ENCODE measurements at regions of chr4 and their contacts with region 1.

Region 1: GRCh38 chr4:3531879-3532713 is at the start of gene LRPAP1:
- DNase-seq: peak; percentile 92
- ATAC-seq: peak; percentile 94
- H3K4me3 Mint-ChIP-seq: peak within 1 kb of the TSS; percentile 100
- H3K27ac Mint-ChIP-seq: peak within 1 kb of the TSS; percentile 97
- H3K4me1 Mint-ChIP-seq: peaks cover 20% of the 10 kb centered on the region
- H3K27me3 Mint-ChIP-seq: no peaks in the 10 kb centered on the region
- total RNA-seq, gene LRPAP1: 50.8 to 53.4 TPM

Region 2: DNA sequence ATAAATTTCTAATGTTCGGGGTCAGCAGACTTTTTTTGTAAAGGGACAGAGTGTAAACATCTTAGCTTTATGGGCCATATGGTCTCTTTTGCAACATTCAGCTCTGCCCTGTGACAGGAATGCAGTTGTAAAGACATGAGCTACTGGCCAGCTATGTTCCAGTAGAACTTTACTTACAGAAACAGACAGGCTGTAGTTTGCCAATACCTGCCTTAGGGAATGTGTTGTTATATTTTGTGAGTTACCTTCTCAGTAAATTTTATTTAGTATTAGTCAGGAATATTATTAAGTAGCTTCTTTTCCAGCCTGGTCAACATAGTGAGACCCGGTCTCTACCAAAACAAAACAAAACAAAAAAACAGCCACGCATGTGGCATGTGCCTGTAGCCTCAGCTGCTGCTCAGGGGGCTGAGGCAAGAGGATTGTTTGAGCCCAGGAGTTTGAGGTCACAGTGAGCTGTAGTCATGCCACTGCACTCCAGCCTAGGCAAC is 408.9 kb before region 1 on chr4:
- CTCF ChIA-PET with region 1: no interaction called
- POLR2A ChIA-PET with region 1: no interaction called
- intact Hi-C with region 1: loop called in 1 of 2 experiments (anchors 1 kb)
- DNase-seq: no peak
- ATAC-seq: no peak
- H3K4me3 Mint-ChIP-seq: no peak overlapping the region
- H3K27ac Mint-ChIP-seq: peak overlapping the region; percentile 69
- H3K4me1 Mint-ChIP-seq: peaks cover 24% of the 10 kb centered on the region
- H3K27me3 Mint-ChIP-seq: no peaks in the 10 kb centered on the region

Region 3: DNA sequence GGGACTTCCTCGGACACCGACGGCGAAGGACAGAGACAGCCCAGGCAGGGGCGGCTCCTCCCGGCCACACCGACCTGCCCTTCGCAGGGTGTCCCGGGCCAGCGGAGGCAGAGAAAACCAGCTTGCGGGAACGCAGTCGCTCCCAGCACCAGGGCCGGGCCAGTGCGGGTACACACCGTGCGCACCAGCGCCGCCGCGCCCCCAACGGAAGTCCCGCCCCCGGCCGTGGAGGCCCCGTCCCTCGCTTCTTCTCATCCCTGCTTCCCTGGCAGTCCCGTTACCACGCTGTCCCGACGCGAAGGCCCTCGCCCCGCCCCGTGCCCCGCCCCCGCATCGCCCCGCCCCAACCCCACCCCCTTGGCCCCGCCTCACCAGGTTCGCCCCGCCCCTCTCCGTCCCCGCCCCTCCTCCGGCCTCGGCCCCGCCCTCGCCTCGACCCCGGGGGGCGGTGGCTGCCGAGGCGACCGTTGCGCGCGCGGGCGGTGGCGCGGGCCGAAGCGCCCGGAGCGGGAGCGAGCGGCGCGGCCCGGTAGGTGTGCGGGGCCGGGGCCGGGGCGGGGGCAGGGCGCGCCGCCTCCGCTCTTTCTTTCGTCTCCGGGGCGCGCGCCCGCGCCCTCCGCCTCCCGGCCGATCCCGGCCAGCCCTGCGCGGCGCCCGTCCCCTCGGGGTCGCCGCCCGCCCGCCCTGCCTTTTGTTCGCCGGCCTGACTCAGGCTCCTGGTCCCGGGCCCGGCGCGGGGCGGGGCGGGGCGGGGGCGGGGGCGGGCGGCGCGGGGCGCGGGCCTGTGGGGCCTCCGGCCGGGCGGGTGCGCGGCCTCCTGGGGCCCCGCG is 239.3 kb before region 1 on chr4 and contains the start of gene RGS12:
- CTCF ChIA-PET with region 1: no interaction called
- POLR2A ChIA-PET with region 1: no interaction called
- intact Hi-C with region 1: loop called in 1 of 2 experiments (anchors 1 kb)
- DNase-seq: peak; percentile 93
- ATAC-seq: peak; percentile 95
- H3K4me3 Mint-ChIP-seq: peak within 1 kb of the TSS; percentile 81
- H3K27ac Mint-ChIP-seq: peak within 1 kb of the TSS; percentile 64
- H3K4me1 Mint-ChIP-seq: peaks cover 11% of the 10 kb centered on the region
- H3K27me3 Mint-ChIP-seq: peaks cover 4% of the 10 kb centered on the region
- total RNA-seq, gene RGS12: 8.0 to 9.4 TPM

Region 4: DNA sequence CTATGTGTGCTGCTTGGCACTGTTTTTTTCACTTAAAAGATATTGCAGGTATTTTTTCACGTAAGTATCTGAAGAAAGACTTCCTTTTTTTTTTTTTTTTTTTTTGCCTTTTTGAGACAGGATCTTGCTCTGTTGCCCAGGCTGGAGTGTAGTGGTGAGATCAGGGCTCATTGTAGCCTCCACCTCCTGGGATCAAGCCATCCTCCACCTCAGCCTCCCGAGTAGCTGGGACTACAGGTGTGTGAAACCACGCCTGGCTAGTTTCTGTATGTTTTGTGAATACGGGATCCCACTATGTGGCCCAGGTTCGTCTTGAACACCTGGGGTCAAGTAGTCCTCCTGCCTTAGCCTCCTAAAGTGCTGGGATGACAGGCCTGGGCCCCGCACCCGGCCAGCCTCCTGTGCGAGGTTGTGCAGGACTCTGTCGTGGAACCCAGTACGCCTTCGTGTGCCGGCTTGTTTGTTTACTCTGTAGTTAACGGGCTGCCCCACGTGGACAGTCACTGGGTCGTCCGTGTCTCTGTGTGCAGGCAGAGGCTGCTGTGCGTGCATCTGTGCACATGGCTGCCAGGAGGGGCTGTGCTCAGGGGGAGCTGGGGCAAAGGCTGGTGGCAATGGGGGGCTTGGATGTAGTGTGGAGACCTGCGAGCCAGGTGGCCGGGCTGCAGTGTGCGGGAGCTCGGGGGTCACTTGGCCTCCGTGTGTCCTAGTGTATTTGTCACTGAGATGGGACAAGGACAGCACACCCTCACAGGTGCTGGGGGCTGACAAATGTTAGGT is 413.6 kb after region 1 on chr4:
- CTCF ChIA-PET with region 1: no interaction called
- POLR2A ChIA-PET with region 1: no interaction called
- intact Hi-C with region 1: loop called in 1 of 2 experiments (anchors 10 kb)
- DNase-seq: no peak
- ATAC-seq: no peak
- H3K4me3 Mint-ChIP-seq: no peak overlapping the region
- H3K27ac Mint-ChIP-seq: no peak overlapping the region
- H3K4me1 Mint-ChIP-seq: peaks cover 3% of the 10 kb centered on the region
- H3K27me3 Mint-ChIP-seq: peaks cover 3% of the 10 kb centered on the region

Region 5: DNA sequence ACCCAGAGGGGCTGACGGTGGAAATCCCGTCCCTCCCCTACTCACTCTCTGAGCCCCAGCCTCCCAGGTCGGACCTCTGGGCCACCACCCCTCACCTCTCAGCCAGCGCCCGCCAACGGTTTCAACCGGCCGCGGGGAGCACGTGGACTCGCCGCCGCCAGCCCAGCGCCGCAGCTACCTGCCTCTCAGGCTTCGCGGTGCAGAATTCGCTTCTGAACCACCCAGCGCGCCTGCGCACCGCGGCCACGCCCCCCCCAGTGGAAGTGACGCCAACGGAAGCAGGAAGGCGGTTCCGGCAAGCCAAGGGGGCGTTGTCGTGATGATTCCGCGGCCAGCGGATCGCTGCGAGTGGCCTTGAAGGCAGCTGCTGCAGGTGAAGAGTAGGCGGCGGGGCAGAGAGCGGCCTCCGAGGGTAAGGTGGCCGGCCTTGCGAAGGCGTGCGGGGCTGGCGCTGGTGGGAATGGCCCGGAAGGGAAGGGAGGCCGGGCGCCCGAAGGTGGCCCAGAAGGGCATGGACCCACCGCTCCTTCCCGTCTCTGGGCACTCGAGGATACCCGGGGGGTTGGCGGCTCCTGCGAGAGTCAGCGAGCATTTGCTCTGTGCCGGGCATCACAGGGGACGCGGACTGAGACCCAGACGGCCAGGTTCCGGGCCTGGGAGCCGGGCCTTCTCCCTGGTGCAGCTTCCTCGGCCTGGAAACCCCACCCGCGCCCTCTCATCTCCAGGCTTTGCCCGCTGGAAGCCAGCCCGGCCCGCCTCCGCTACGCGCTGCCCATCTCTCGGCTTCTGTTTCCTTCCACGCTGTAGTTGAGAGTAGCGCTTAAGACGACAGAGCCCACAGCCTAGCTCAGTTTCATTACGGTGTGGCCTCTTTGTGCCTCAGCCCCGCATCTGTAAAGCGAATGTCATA is 758.1 kb after region 1 on chr4 and contains the starts of genes LYAR and ZBTB49:
- CTCF ChIA-PET with region 1: no interaction called
- POLR2A ChIA-PET with region 1: no interaction called
- intact Hi-C with region 1: loop called in 1 of 2 experiments (anchors 5 kb)
- DNase-seq: peak; percentile 98
- ATAC-seq: peak; percentile 95
- H3K4me3 Mint-ChIP-seq: peak within 1 kb of the TSS; percentile 93
- H3K27ac Mint-ChIP-seq: peak within 1 kb of the TSS; percentile 77
- H3K4me1 Mint-ChIP-seq: peaks cover 35% of the 10 kb centered on the region
- H3K27me3 Mint-ChIP-seq: no peaks in the 10 kb centered on the region
- total RNA-seq, gene LYAR: 65.6 to 74.3 TPM
- total RNA-seq, gene ZBTB49: 3.3 to 3.8 TPM

Measured in activated CD4-positive, alpha-beta T cell treated with anti-CD3 and anti-CD28 coated beads for 36 hours (primary cell).